ENCODE measurements at regions of chr15 and their contacts with region 1.

Region 1: GRCh38 chr15:29364429-29365078 is 94.9 kb upstream of the NSMCE3 start:
- DNase-seq: peak; percentile 13
- H3K27ac ChIP-seq: no peak overlapping the region
- CTCF ChIP-seq: no peak

Region 2: DNA sequence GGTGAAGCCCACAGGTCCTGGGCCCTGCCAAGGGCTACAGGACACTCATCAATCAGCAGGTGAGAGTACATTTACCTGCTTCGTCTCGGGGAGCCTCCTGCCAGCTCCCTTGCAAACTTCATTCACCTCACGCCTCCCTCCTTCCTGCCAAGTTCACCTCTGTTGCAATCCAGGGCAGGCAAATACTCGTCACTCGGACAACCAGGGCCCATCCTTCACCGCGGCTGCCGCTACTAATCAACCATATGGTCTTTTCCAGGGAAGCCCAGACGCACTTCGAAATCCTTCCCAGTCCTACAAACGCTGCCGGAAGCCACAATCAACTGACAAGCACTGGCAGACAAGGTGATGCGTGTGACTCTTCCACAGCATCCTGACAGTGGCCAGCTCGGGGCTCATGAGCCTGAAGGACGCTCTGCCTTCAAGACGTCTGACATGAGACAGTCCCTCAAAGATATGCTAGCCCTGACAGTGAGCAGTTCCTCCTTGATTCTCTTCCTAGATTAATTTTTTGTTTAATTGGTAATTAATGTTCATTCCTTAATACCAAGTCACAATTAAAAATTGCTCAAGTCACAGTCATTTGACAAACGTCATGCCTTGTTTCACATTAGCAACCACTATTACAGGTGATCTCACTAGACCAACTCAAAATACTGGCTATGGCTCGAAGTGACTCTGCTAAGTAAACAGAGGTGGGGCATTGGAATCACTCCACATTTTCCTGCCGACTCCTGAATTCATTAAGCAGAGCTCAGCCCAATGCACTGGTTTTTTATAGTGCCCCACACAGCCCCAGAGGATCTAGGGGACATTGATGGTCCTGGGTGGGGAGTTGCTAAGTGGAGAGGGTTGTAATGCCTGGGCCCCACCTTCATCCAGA is 106.0 kb after region 1 on chr15:
- CTCF ChIA-PET with region 1: no interaction called
- POLR2A ChIA-PET with region 1: interaction called, 25 read pairs
- DNase-seq: peak; percentile 44
- H3K27ac ChIP-seq: no peak overlapping the region
- CTCF ChIP-seq: no peak

Measured in RWPE1 (cell line).